Right ventricle myocardium inferior (tissue), 1 donor: ENCODE measurements at regions of chr4 and their contacts with region 1.

Region 1: GRCh38 chr4:15655229-15656037 is at the start of gene FBXL5:
- DNase-seq: peak; percentile 92
- ATAC-seq: peak; percentile 90
- total RNA-seq, gene FBXL5: 93.9 TPM

Region 2: GRCh38 chr4:15149839-15150476 is 505.5 kb before region 1 on chr4:
- intact Hi-C with region 1: loop called (anchors 10 kb)
- DNase-seq: peak; percentile 92
- ATAC-seq: peak; percentile 83

Region 3: GRCh38 chr4:15681207-15682015 is 26.0 kb after region 1 on chr4 and contains the start of gene FAM200B:
- intact Hi-C with region 1: loop called (anchors 2 kb)
- DNase-seq: peak; percentile 100
- ATAC-seq: peak; percentile 99
- total RNA-seq, gene FAM200B: 25.2 TPM